Activated CD8-positive, alpha-beta T cell treated with anti-CD3 and anti-CD28 coated beads, Interleukin-2, amount 10 ng/mL, durations not matched to agents 7 days and 5 days (primary cell): ENCODE measurements at regions of chr1 and their contacts with region 1.

Region 1: GRCh38 chr1:202571347-202572339 is 138.6 kb downstream of the SYT2 start:
- DNase-seq: peak; percentile 58
- ATAC-seq: peak; percentile 73
- H3K4me3 Mint-ChIP-seq: no peak overlapping the region
- H3K27ac Mint-ChIP-seq: no peak overlapping the region
- H3K4me1 Mint-ChIP-seq: peaks cover 4% of the 10 kb centered on the region
- H3K27me3 Mint-ChIP-seq: no peaks in the 10 kb centered on the region

Region 2: DNA sequence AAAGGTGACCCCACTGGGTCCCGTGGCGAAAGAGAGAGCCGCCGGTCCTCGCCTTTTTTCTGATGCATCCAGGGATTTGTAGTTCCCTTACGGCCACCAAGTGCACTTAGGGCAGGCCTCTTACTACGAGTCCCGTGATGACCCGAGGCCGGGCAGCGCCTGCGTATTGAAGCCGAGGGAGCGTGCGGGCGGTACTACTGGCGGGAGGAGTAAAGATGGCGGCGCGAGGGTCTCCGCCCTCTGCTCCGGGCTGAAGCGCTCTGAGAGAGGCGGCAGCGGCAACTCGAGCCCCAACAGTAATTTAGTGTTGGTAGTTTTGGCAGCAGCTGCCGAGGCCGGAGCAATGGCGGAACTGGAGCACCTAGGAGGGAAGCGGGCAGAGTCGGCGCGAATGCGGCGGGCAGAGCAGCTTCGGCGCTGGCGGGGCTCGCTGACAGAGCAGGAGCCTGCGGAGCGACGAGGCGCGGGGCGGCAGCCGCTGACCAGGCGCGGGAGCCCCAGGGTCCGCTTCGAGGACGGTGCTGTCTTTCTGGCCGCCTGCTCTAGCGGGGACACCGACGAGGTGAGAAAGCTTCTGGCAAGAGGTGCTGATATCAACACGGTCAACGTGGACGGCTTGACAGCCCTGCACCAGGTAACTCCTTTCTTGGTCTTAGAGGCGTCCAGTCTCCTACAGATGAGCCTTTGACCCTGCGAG is 223.0 kb before region 1 on chr1 and contains the start of gene PPP1R12B:
- CTCF ChIA-PET with region 1: interaction called, 12 read pairs
- POLR2A ChIA-PET with region 1: no interaction called
- DNase-seq: peak; percentile 98
- ATAC-seq: peak; percentile 99
- H3K4me3 Mint-ChIP-seq: peak within 1 kb of the TSS; percentile 80
- H3K27ac Mint-ChIP-seq: peak within 1 kb of the TSS; percentile 94
- H3K4me1 Mint-ChIP-seq: peaks cover 24% of the 10 kb centered on the region
- H3K27me3 Mint-ChIP-seq: no peaks in the 10 kb centered on the region
- total RNA-seq, gene PPP1R12B: 21.9 to 24.2 TPM

Region 3: DNA sequence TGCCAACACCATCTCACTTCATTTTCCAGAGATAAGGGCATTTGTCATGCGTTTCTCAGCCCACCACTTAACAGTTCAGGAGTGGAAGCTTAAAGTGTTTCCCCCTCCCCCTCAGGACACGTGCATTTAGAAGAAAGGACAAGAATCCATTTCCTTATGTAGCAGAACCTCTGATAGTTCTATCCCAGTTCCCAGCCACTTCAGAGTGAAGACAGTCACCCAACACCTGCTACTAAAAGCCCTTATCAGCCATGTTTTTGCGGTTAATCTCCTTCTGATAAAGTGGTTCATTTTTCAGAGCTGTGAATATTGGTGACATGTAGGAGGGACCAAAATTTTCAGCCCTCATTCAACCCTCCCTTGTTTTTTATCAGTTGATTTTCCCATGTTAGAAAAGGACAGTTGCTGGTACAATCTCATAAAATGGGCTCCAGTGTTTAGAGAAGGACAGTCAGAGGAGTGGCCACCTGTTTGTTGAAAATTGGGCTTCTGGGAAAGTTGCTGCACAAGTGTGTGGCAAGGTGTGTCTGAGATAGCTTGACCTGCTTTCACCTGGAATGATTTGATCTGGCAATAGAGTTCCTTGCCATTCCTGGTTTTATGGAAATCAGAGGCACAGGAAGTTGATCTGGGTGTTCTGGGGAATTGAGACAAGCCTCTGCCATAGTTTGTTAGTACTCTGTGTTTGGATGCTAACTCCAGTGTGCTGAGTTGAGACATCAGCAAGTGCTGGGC is 109.1 kb before region 1 on chr1:
- CTCF ChIA-PET with region 1: interaction called, 30 read pairs
- POLR2A ChIA-PET with region 1: no interaction called
- DNase-seq: no peak
- ATAC-seq: no peak
- H3K4me3 Mint-ChIP-seq: no peak overlapping the region
- H3K27ac Mint-ChIP-seq: no peak overlapping the region
- H3K4me1 Mint-ChIP-seq: peaks cover 5% of the 10 kb centered on the region
- H3K27me3 Mint-ChIP-seq: no peaks in the 10 kb centered on the region

Region 4: GRCh38 chr1:202501281-202501680 is 70.4 kb before region 1 on chr1:
- CTCF ChIA-PET with region 1: interaction called, 10 read pairs
- POLR2A ChIA-PET with region 1: no interaction called
- DNase-seq: no peak
- ATAC-seq: no peak
- H3K4me3 Mint-ChIP-seq: no peak overlapping the region
- H3K27ac Mint-ChIP-seq: no peak overlapping the region
- H3K4me1 Mint-ChIP-seq: no peaks in the 10 kb centered on the region
- H3K27me3 Mint-ChIP-seq: no peaks in the 10 kb centered on the region

Region 5: GRCh38 chr1:202615501-202616354 is 44.1 kb after region 1 on chr1:
- CTCF ChIA-PET with region 1: no interaction called
- POLR2A ChIA-PET with region 1: no interaction called
- DNase-seq: peak; percentile 52
- ATAC-seq: peak; percentile 65
- H3K4me3 Mint-ChIP-seq: peak overlapping the region; percentile 21
- H3K27ac Mint-ChIP-seq: peak overlapping the region; percentile 19
- H3K4me1 Mint-ChIP-seq: peaks cover 38% of the 10 kb centered on the region
- H3K27me3 Mint-ChIP-seq: peaks cover 21% of the 10 kb centered on the region

Region 6: GRCh38 chr1:202713110-202713509 is 141.5 kb after region 1 on chr1:
- CTCF ChIA-PET with region 1: interaction called, 11 read pairs
- POLR2A ChIA-PET with region 1: no interaction called
- DNase-seq: no peak
- ATAC-seq: no peak
- H3K4me3 Mint-ChIP-seq: no peak overlapping the region
- H3K27ac Mint-ChIP-seq: no peak overlapping the region
- H3K4me1 Mint-ChIP-seq: no peaks in the 10 kb centered on the region
- H3K27me3 Mint-ChIP-seq: peaks cover 65% of the 10 kb centered on the region